CD8-positive, alpha-beta memory T cell (primary cell): ENCODE measurements at regions of chr13 and their contacts with region 1.

Region 1: GRCh38 chr13:114110091-114110829 is 22.2 kb downstream of the RASA3 start:
- DNase-seq: peak; percentile 63 to 88 (median 85)
- H3K4me3 ChIP-seq: peak overlapping the region; percentile 52
- H3K4me3 Mint-ChIP-seq: peak overlapping the region; percentile 75 to 91 (median 84)
- H3K27ac ChIP-seq: peak overlapping the region; percentile 43
- H3K27ac Mint-ChIP-seq: peak overlapping the region; percentile 90 to 96 (median 95)
- H3K4me1 ChIP-seq: peaks cover 94% of the 10 kb centered on the region
- H3K4me1 Mint-ChIP-seq: peaks cover 75 to 88% (median 76%) of the 10 kb centered on the region in 3 donors
- H3K27me3 ChIP-seq: no peaks in the 10 kb centered on the region
- H3K27me3 Mint-ChIP-seq: peaks cover 0 to 6% of the 10 kb centered on the region in 2 donors

Region 2: GRCh38 chr13:114067381-114067885 is 42.8 kb before region 1 on chr13:
- CTCF ChIA-PET with region 1: interaction called, 13 read pairs
- POLR2A ChIA-PET with region 1: interaction called, 3 read pairs
- DNase-seq: peak in 2 of 5 donors; percentile 27 to 45
- H3K4me3 ChIP-seq: peak overlapping the region; percentile 40
- H3K4me3 Mint-ChIP-seq: peak overlapping the region; percentile 76 to 92 (median 77)
- H3K27ac ChIP-seq: peak overlapping the region; percentile 55
- H3K27ac Mint-ChIP-seq: peak overlapping the region; percentile 78 to 97 (median 90)
- H3K4me1 ChIP-seq: peaks cover 59% of the 10 kb centered on the region
- H3K4me1 Mint-ChIP-seq: peaks cover 57 to 70% (median 68%) of the 10 kb centered on the region in 3 donors
- H3K27me3 ChIP-seq: no peaks in the 10 kb centered on the region
- H3K27me3 Mint-ChIP-seq: peaks cover 0 to 4% of the 10 kb centered on the region in 2 donors

Region 3: GRCh38 chr13:114078461-114079451 is 31.5 kb before region 1 on chr13:
- CTCF ChIA-PET with region 1: no interaction called
- POLR2A ChIA-PET with region 1: no interaction called
- DNase-seq: peak in 2 of 5 donors; percentile 41 to 46
- H3K4me3 ChIP-seq: no peak overlapping the region
- H3K4me3 Mint-ChIP-seq: peak overlapping the region in 5 of 7 donors; percentile 8 to 57 (median 28)
- H3K27ac ChIP-seq: no peak overlapping the region
- H3K27ac Mint-ChIP-seq: peak overlapping the region in 7 of 8 donors; percentile 43 to 77 (median 63)
- H3K4me1 ChIP-seq: peaks cover 58% of the 10 kb centered on the region
- H3K4me1 Mint-ChIP-seq: peaks cover 47 to 74% (median 56%) of the 10 kb centered on the region in 3 donors
- H3K27me3 ChIP-seq: no peaks in the 10 kb centered on the region
- H3K27me3 Mint-ChIP-seq: peaks cover 0 to 3% of the 10 kb centered on the region in 2 donors

Region 4: GRCh38 chr13:114097212-114097892 is 12.9 kb before region 1 on chr13:
- CTCF ChIA-PET with region 1: interaction called, 10 read pairs
- POLR2A ChIA-PET with region 1: no interaction called
- DNase-seq: no peak
- H3K4me3 ChIP-seq: no peak overlapping the region
- H3K4me3 Mint-ChIP-seq: peak overlapping the region; percentile 17 to 87 (median 52)
- H3K27ac ChIP-seq: no peak overlapping the region
- H3K27ac Mint-ChIP-seq: peak overlapping the region; percentile 67 to 92 (median 84)
- H3K4me1 ChIP-seq: peaks cover 66% of the 10 kb centered on the region
- H3K4me1 Mint-ChIP-seq: peaks cover 74 to 92% (median 82%) of the 10 kb centered on the region in 3 donors
- H3K27me3 ChIP-seq: no peaks in the 10 kb centered on the region
- H3K27me3 Mint-ChIP-seq: peaks cover 0 to 2% of the 10 kb centered on the region in 2 donors

Region 5: GRCh38 chr13:114132419-114133121 is 22.3 kb after region 1 on chr13 and contains the start of gene RASA3:
- CTCF ChIA-PET with region 1: interaction called, 60 read pairs
- POLR2A ChIA-PET with region 1: interaction called, 5 read pairs
- DNase-seq: peak; percentile 61 to 73 (median 69)
- H3K4me3 ChIP-seq: peak within 1 kb of the TSS; percentile 89
- H3K4me3 Mint-ChIP-seq: peak within 1 kb of the TSS; percentile 100
- H3K27ac ChIP-seq: peak within 1 kb of the TSS; percentile 85
- H3K27ac Mint-ChIP-seq: peak within 1 kb of the TSS; percentile 80 to 99 (median 98)
- H3K4me1 ChIP-seq: peaks cover 47% of the 10 kb centered on the region
- H3K4me1 Mint-ChIP-seq: peaks cover 46 to 72% (median 58%) of the 10 kb centered on the region in 3 donors
- H3K27me3 ChIP-seq: no peaks in the 10 kb centered on the region
- H3K27me3 Mint-ChIP-seq: peaks cover 0 to 4% of the 10 kb centered on the region in 2 donors
- total RNA-seq, gene RASA3: 26.4 to 27.1 TPM

Region 6: GRCh38 chr13:114143806-114144605 is 33.7 kb after region 1 on chr13:
- CTCF ChIA-PET with region 1: interaction called, 17 read pairs
- POLR2A ChIA-PET with region 1: interaction called, 7 read pairs
- DNase-seq: peak in 3 of 5 donors; percentile 43 to 73 (median 62)
- H3K4me3 ChIP-seq: peak overlapping the region; percentile 39
- H3K4me3 Mint-ChIP-seq: no peak overlapping the region
- H3K27ac ChIP-seq: peak overlapping the region; percentile 63
- H3K27ac Mint-ChIP-seq: peak overlapping the region in 4 of 8 donors; percentile 70 to 96 (median 93)
- H3K4me1 ChIP-seq: peaks cover 90% of the 10 kb centered on the region
- H3K4me1 Mint-ChIP-seq: peaks cover 14 to 41% (median 39%) of the 10 kb centered on the region in 3 donors
- H3K27me3 ChIP-seq: no peaks in the 10 kb centered on the region
- H3K27me3 Mint-ChIP-seq: peaks cover 0 to 2% of the 10 kb centered on the region in 2 donors

Region 7: GRCh38 chr13:114226699-114227323 is 116.6 kb after region 1 on chr13:
- CTCF ChIA-PET with region 1: interaction called, 48 read pairs
- POLR2A ChIA-PET with region 1: interaction called, 4 read pairs
- DNase-seq: peak; percentile 73 to 85 (median 76)
- H3K4me3 ChIP-seq: no peak overlapping the region
- H3K4me3 Mint-ChIP-seq: peak overlapping the region in 6 of 7 donors; percentile 14 to 50 (median 38)
- H3K27ac ChIP-seq: no peak overlapping the region
- H3K27ac Mint-ChIP-seq: peak overlapping the region; percentile 9 to 92 (median 81)
- H3K4me1 ChIP-seq: peaks cover 41% of the 10 kb centered on the region
- H3K4me1 Mint-ChIP-seq: peaks cover 36 to 45% (median 43%) of the 10 kb centered on the region in 3 donors
- H3K27me3 ChIP-seq: no peaks in the 10 kb centered on the region
- H3K27me3 Mint-ChIP-seq: peaks cover 14% of the 10 kb centered on the region in 2 donors